ENCODE measurements at regions of chr17 and their contacts with region 1.

Region 1: GRCh38 chr17:4789901-4790704 is 1.3 kb downstream of the GLTPD2 start:
- DNase-seq: peak; percentile 54 to 94 (median 77)
- ATAC-seq: peak; percentile 77
- H3K4me3 ChIP-seq: peak overlapping the region; percentile 56 to 60
- H3K4me3 Mint-ChIP-seq: peak overlapping the region; percentile 89
- H3K27ac ChIP-seq: peak overlapping the region; percentile 63 to 68
- H3K27ac Mint-ChIP-seq: peak overlapping the region; percentile 96
- H3K4me1 ChIP-seq: peaks cover 29% of the 10 kb centered on the region
- H3K4me1 Mint-ChIP-seq: peaks cover 27% of the 10 kb centered on the region
- H3K27me3 ChIP-seq: peaks cover 15 to 20% of the 10 kb centered on the region in 2 experiments
- H3K27me3 Mint-ChIP-seq: peaks cover 26% of the 10 kb centered on the region
- CTCF ChIP-seq: peak; percentile 80

Region 2: GRCh38 chr17:4715063-4715744 is 74.9 kb before region 1 on chr17:
- CTCF ChIA-PET with region 1: interaction called, 45 read pairs
- POLR2A ChIA-PET with region 1: interaction called, 30 read pairs
- intact Hi-C with region 1: loop called (anchors 1 kb)
- DNase-seq: peak in 8 of 9 experiments; percentile 43 to 83 (median 74)
- ATAC-seq: peak; percentile 12
- H3K4me3 ChIP-seq: peak overlapping the region; percentile 18 to 34
- H3K4me3 Mint-ChIP-seq: peak overlapping the region; percentile 82
- H3K27ac ChIP-seq: peak overlapping the region; percentile 50 to 82
- H3K27ac Mint-ChIP-seq: peak overlapping the region; percentile 95
- H3K4me1 ChIP-seq: peaks cover 62% of the 10 kb centered on the region
- H3K4me1 Mint-ChIP-seq: peaks cover 47% of the 10 kb centered on the region
- H3K27me3 ChIP-seq: no peaks in the 10 kb centered on the region
- H3K27me3 Mint-ChIP-seq: no peaks in the 10 kb centered on the region
- CTCF ChIP-seq: no peak

Region 3: DNA sequence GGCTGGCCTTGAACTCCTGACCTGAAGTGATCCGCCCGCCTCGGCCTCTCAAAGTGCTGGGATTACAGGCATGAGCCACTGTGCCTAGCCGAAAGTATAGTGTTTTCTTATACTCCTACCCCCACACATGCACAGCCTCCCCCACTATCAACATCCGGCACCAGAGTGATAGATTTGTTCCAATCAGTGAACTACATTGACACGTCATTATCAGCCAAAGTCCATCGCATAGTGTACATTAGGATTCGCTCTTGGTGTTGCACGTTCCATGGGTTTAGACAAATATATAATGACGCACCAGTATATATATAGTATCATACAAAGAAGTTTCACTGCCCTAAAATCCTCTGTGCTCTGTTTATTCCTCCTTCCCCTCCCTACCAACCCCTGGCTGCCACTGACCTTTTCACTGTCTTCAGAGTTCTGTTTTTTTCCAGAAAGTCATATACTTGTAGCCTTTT is 30.3 kb before region 1 on chr17:
- CTCF ChIA-PET with region 1: no interaction called
- POLR2A ChIA-PET with region 1: no interaction called
- intact Hi-C with region 1: no loop called
- DNase-seq: no peak
- ATAC-seq: no peak
- H3K4me3 ChIP-seq: no peak overlapping the region
- H3K4me3 Mint-ChIP-seq: no peak overlapping the region
- H3K27ac ChIP-seq: no peak overlapping the region
- H3K27ac Mint-ChIP-seq: no peak overlapping the region
- H3K4me1 ChIP-seq: no peaks in the 10 kb centered on the region
- H3K4me1 Mint-ChIP-seq: no peaks in the 10 kb centered on the region
- H3K27me3 ChIP-seq: no peaks in the 10 kb centered on the region
- H3K27me3 Mint-ChIP-seq: peaks cover 12% of the 10 kb centered on the region
- CTCF ChIP-seq: no peak

Region 4: GRCh38 chr17:4806777-4807604 is 16.9 kb after region 1 on chr17 and contains the start of gene PLD2:
- CTCF ChIA-PET with region 1: interaction called, 5 read pairs
- POLR2A ChIA-PET with region 1: interaction called, 7 read pairs
- intact Hi-C with region 1: loop called (anchors 1 kb)
- DNase-seq: peak; percentile 60 to 93 (median 85)
- ATAC-seq: peak; percentile 98
- H3K4me3 ChIP-seq: peak within 1 kb of the TSS; percentile 56 to 58
- H3K4me3 Mint-ChIP-seq: peak within 1 kb of the TSS; percentile 81
- H3K27ac ChIP-seq: peak within 1 kb of the TSS in 1 of 2 experiments; percentile 39
- H3K27ac Mint-ChIP-seq: no peak within 1 kb of the TSS
- H3K4me1 ChIP-seq: peaks cover 11% of the 10 kb centered on the region
- H3K4me1 Mint-ChIP-seq: peaks cover 19% of the 10 kb centered on the region
- H3K27me3 ChIP-seq: no peaks in the 10 kb centered on the region
- H3K27me3 Mint-ChIP-seq: no peaks in the 10 kb centered on the region
- CTCF ChIP-seq: no peak
- total RNA-seq, gene PLD2: 14.3 to 15.7 TPM

Region 5: GRCh38 chr17:4881761-4882555 is 91.9 kb after region 1 on chr17:
- CTCF ChIA-PET with region 1: interaction called, 11 read pairs
- POLR2A ChIA-PET with region 1: no interaction called
- intact Hi-C with region 1: loop called in 1 of 2 experiments (anchors 5 kb)
- DNase-seq: peak; percentile 43 to 83 (median 72)
- ATAC-seq: peak; percentile 98
- H3K4me3 ChIP-seq: no peak overlapping the region
- H3K4me3 Mint-ChIP-seq: no peak overlapping the region
- H3K27ac ChIP-seq: no peak overlapping the region
- H3K27ac Mint-ChIP-seq: no peak overlapping the region
- H3K4me1 ChIP-seq: no peaks in the 10 kb centered on the region
- H3K4me1 Mint-ChIP-seq: peaks cover 3% of the 10 kb centered on the region
- H3K27me3 ChIP-seq: no peaks in the 10 kb centered on the region
- H3K27me3 Mint-ChIP-seq: no peaks in the 10 kb centered on the region
- CTCF ChIP-seq: peak; percentile 79

Measured in CD8-positive, alpha-beta T cell (primary cell).